Stomach (tissue), 19 donors: ENCODE measurements at regions of chr6 and their contacts with region 1.

Region 1: DNA sequence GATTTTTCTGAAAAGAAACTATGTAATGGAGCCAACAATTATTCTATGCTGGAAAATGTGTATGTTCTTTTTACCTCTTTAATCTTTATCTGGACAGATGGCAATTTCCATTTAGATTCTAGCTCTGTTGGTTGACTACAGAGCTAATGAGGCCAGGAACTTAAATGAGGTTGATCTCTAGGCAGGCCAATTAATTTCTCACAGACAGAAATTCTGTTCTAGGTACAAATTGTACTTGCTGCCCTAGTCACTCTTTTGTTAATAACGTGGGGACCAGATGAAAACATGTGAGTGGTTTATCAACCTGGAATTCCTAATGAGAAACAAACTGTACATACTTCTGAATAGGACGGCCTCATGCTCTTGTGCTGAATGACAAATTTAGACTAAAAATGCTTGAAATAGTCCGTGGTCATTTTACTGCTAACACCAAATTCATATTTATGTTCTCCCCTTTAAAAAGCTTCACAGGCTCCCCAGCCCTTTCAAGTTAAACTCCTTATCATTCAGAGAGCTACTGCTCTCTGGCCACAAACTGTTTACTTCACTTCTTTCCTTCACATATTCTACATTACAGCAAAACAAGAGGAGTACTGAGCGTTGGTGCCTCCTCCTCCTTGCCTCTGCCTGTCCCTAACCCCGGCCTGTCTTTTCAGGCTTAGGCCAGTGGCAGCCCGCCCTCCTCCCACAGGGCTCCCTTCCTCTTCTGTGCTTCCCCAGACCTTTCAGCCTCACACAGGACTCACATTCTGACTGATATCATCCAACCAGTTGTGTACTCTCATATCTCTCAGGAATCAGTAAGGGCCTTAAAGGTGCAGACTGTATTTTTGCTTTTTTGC is 41.4 kb downstream of the DTNBP1 start:
- DNase-seq: peak; percentile 41 to 52
- H3K4me3 ChIP-seq: no peak overlapping the region
- H3K27ac ChIP-seq: peak overlapping the region; percentile 12 to 66 (median 36)
- H3K4me1 ChIP-seq: peaks cover 8 to 37% (median 26%) of the 10 kb centered on the region in 4 donors
- H3K27me3 ChIP-seq: no peaks in the 10 kb centered on the region
- CTCF ChIP-seq: no peak
- EP300 ChIP-seq: no peak
- POLR2A ChIP-seq: no peak

Region 2: DNA sequence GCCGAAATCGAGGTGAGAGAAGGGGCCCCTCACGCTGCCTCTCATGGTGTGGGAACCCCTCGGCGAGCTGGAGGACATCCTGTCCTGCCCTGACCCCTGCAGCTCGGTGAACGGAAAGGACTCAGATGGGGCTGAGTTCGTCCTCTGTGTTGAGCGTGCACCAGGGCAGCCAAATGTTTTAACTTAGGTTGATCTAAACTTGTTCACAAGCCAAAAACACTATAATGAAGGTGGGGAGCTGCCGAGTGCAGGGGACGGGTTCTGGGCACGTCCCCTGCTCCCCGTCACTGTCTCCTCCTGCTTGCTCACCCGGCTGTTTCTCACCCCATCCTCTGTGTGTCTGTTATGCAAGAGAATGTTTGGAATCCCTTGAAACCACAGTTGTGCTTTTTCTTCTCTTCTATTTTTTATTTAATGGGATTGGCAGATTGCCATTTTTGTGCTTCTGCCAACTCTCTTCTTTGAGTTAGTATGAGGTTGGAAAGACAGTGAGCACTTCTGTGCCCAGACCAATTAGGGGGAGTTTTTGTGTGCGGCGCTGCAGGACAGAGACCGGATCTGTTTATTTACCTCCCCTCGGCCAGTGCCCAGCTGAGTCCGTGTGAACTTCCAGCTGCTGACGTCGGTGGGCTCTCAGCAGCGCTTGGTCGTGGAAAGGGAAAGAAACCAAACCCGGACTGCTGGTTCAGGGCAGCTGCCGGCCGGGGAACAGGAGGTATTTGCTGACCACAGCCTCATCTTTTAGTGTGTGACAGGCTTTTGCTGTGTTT is 116.7 kb before region 1 on chr6:
- intact Hi-C with region 1: loop called (anchors 10 kb)
- DNase-seq: peak; percentile 39 to 89
- H3K4me3 ChIP-seq: peak overlapping the region; percentile 1 to 19 (median 12)
- H3K27ac ChIP-seq: peak overlapping the region in 4 of 5 donors; percentile 38 to 81 (median 66)
- H3K4me1 ChIP-seq: peaks cover 16 to 57% (median 29%) of the 10 kb centered on the region in 4 donors
- H3K27me3 ChIP-seq: no peaks in the 10 kb centered on the region
- CTCF ChIP-seq: no peak
- EP300 ChIP-seq: no peak
- POLR2A ChIP-seq: no peak